HepG2 (cell line): ENCODE measurements at regions of chr5 and their contacts with region 1.

Region 1: GRCh38 chr5:171913987-171914273 is 92.5 kb downstream of the FBXW11 start:
- DNase-seq: no peak
- ATAC-seq: no peak
- H3K4me3 ChIP-seq: no peak overlapping the region
- H3K27ac ChIP-seq: no peak overlapping the region
- H3K4me1 ChIP-seq: no peaks in the 10 kb centered on the region
- H3K27me3 ChIP-seq: no peaks in the 10 kb centered on the region
- CTCF ChIP-seq: no peak
- EP300 ChIP-seq: no peak
- POLR2A ChIP-seq: no peak
- RAD21 ChIP-seq: no peak

Region 2: GRCh38 chr5:170216266-170216864 is 1697.6 kb before region 1 on chr5:
- CTCF ChIA-PET with region 1: no interaction called
- POLR2A ChIA-PET with region 1: no interaction called
- in situ Hi-C with region 1: no loop called
- intact Hi-C with region 1: no loop called
- DNase-seq: peak; percentile 29
- ATAC-seq: peak; percentile 74; the same call in 2 of the 3 replicates
- H3K4me3 ChIP-seq: no peak overlapping the region
- H3K27ac ChIP-seq: no peak overlapping the region
- H3K4me1 ChIP-seq: no peaks in the 10 kb centered on the region
- H3K27me3 ChIP-seq: no peaks in the 10 kb centered on the region
- CTCF ChIP-seq: peak; percentile 60
- EP300 ChIP-seq: no peak
- POLR2A ChIP-seq: no peak
- RAD21 ChIP-seq: no peak

Region 3: GRCh38 chr5:171927345-171927941 is 13.5 kb after region 1 on chr5:
- CTCF ChIA-PET with region 1: no interaction called
- POLR2A ChIA-PET with region 1: no interaction called
- in situ Hi-C with region 1: no loop called
- intact Hi-C with region 1: no loop called
- DNase-seq: no peak
- ATAC-seq: no peak
- H3K4me3 ChIP-seq: no peak overlapping the region
- H3K27ac ChIP-seq: no peak overlapping the region
- H3K4me1 ChIP-seq: peaks cover 12% of the 10 kb centered on the region
- H3K27me3 ChIP-seq: no peaks in the 10 kb centered on the region
- CTCF ChIP-seq: peak; percentile 21
- EP300 ChIP-seq: no peak
- POLR2A ChIP-seq: no peak
- RAD21 ChIP-seq: no peak

Region 4: GRCh38 chr5:172006321-172007174 is 92.6 kb after region 1 on chr5 and contains the start of gene FBXW11:
- CTCF ChIA-PET with region 1: interaction called, 4 read pairs
- POLR2A ChIA-PET with region 1: no interaction called
- in situ Hi-C with region 1: no loop called
- intact Hi-C with region 1: loop called (anchors 2 kb)
- DNase-seq: peak; percentile 94
- ATAC-seq: peak; percentile 92
- H3K4me3 ChIP-seq: peak within 1 kb of the TSS; percentile 78 to 99 (median 93)
- H3K27ac ChIP-seq: peak within 1 kb of the TSS; percentile 98
- H3K4me1 ChIP-seq: peaks cover 42% of the 10 kb centered on the region
- H3K27me3 ChIP-seq: peaks cover 0 to 4% of the 10 kb centered on the region in 2 experiments; a peak in 1 of 5 replicates
- CTCF ChIP-seq: no peak; the same call in 1 of the 2 replicates
- EP300 ChIP-seq: no peak
- POLR2A ChIP-seq: peak; percentile 89 to 94
- RAD21 ChIP-seq: peak; percentile 42
- total RNA-seq, gene FBXW11: 53.6 and 78.0 TPM in 2 replicates

Region 5: GRCh38 chr5:172035039-172035438 is 121.1 kb after region 1 on chr5:
- CTCF ChIA-PET with region 1: interaction called, 41 read pairs
- POLR2A ChIA-PET with region 1: no interaction called
- in situ Hi-C with region 1: loop called (anchors 5 kb)
- intact Hi-C with region 1: loop called (anchors 1 kb)
- DNase-seq: no peak
- ATAC-seq: no peak
- H3K4me3 ChIP-seq: no peak overlapping the region
- H3K27ac ChIP-seq: no peak overlapping the region
- H3K4me1 ChIP-seq: peaks cover 4% of the 10 kb centered on the region; the same call in 1 of the 2 replicates
- H3K27me3 ChIP-seq: no peaks in the 10 kb centered on the region; a peak in 1 of 5 replicates
- CTCF ChIP-seq: no peak
- EP300 ChIP-seq: no peak
- POLR2A ChIP-seq: no peak
- RAD21 ChIP-seq: no peak

Region 6: DNA sequence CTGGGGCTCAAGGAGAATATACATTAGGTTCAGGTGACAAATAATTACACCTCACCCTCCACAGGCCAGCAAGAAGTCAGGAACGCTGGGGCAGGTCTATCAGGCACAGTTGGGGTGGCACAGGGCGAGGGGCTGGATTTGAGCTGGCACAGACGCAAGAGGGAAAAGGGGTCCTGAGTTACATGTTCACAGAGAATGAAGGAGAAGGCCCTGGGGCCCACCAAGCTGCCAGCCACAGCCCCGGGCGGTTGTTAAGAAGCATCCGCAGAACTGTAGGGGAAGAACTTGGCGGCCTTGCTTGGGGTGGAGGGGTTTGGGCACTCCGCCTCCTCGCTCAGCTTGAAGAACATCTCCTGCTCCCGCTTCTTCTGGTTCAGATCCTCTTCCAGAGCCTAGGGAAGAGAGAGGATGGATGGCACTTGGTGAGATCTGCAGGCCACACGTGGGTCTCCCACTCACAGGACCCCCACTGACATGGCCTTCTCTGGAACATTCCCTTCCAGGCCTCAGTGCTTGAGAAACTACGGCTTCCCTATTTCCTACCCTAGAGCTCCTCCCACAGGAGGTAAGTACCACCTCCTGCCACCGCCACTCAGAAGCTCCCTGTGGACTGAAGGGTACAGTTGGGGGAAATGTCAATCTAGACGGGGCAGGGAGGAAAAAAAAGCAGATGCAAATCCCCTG is 130.8 kb after region 1 on chr5:
- CTCF ChIA-PET with region 1: interaction called, 41 read pairs
- POLR2A ChIA-PET with region 1: no interaction called
- in situ Hi-C with region 1: loop called (anchors 5 kb)
- intact Hi-C with region 1: loop called (anchors 1 kb)
- DNase-seq: no peak
- ATAC-seq: no peak
- H3K4me3 ChIP-seq: no peak overlapping the region
- H3K27ac ChIP-seq: no peak overlapping the region
- H3K4me1 ChIP-seq: peaks cover 20% of the 10 kb centered on the region
- H3K27me3 ChIP-seq: no peaks in the 10 kb centered on the region; a peak in 1 of 5 replicates
- CTCF ChIP-seq: peak; percentile 30
- EP300 ChIP-seq: no peak
- POLR2A ChIP-seq: no peak
- RAD21 ChIP-seq: no peak